ENCODE measurements at regions of chr22 and their contacts with region 1.

Region 1: DNA sequence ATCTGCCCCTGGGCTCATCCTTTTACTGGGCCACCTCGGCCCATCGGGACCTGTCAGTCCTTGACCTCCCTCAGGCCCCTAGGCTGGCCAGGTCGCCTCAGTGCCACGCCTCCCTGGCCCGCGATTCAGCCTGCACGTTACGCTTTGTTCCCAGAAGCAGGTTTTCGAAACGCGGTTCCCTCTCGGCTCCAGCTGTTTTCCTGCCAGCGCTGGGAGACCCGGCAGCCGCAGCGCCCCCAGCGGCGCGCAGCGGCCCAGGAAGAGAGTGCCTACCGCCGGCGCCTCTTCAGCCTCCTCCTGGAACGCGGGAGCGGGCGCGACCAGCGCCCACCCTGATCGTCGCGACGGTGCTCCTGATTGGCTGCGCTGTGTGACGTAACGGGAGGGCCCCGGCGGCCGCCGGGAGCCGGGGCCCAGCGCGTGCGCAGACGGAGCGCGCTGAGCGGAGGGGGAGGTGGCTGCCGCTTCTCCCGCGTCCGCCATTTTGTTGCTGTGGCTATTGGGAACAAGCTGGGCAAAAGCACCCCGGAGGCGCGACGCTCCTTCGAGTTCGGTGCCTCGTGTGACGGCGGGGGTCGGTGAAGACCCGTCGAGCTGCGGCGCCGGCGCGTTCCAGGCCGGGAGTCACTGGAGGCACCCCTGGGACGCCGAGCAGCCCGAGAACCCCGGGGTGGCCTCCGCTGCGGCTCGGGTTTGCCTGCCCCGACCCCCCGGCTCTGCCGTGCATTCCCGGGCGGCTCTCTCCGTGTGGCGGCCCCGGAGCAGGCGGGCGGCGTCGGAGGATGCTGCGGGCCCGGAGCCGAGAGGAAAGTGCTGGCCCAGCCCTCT is at the start of gene CRKL:
- DNase-seq: peak; percentile 98
- H3K4me3 ChIP-seq: peak within 1 kb of the TSS; percentile 97
- H3K27ac ChIP-seq: peak within 1 kb of the TSS; percentile 70
- H3K4me1 ChIP-seq: peaks cover 16% of the 10 kb centered on the region
- CTCF ChIP-seq: peak; percentile 91
- total RNA-seq, gene CRKL: 47.5 and 57.7 TPM in 2 replicates

Region 2: DNA sequence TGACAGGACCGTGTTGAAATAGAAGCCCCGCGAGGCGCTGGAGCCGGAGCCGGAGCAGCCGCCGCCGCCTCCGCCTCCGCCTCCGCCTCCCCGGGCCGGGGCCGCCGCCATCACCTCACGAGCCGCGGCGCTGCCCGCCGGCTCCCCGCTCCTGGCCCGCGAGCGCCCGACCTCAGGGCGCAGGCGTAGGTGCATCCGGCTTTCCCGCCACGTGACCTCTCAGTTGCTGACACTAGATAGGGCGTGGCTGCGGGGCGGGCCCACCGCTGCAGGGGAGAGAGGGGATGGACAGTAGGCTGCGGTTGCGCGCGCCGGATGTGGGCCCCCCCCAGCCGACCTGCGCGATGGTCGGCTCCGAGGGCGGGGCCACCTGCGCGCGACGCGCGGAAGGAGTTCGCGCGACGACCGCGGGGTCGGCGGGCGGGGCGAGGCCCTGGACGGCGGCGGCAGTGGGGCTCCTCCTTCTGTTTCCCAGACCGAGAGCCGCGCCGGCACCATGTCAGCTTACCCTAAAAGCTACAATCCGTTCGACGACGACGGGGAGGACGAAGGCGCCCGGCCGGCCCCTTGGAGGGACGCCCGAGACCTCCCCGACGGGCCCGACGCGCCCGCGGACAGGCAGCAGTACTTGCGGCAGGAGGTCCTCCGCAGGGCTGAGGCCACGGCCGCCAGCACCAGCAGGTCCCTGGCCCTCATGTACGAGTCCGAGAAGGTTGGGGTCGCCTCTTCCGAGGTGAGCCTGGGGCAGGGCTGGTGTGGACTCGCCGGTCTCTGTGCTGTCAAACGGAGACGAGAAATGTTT is 58.4 kb before region 1 on chr22 and contains the starts of genes PI4KA and SNAP29:
- CTCF ChIA-PET with region 1: no interaction called
- POLR2A ChIA-PET with region 1: interaction called, 3 read pairs
- intact Hi-C with region 1: loop called (anchors 2 kb)
- DNase-seq: peak; percentile 98
- H3K4me3 ChIP-seq: peak within 1 kb of the TSS; percentile 94
- H3K27ac ChIP-seq: peak within 1 kb of the TSS; percentile 41
- H3K4me1 ChIP-seq: peaks cover 22% of the 10 kb centered on the region
- CTCF ChIP-seq: no peak
- total RNA-seq, gene PI4KA: 43.9 and 46.9 TPM in 2 replicates
- total RNA-seq, gene SNAP29: 9.7 and 12.7 TPM in 2 replicates

Region 3: DNA sequence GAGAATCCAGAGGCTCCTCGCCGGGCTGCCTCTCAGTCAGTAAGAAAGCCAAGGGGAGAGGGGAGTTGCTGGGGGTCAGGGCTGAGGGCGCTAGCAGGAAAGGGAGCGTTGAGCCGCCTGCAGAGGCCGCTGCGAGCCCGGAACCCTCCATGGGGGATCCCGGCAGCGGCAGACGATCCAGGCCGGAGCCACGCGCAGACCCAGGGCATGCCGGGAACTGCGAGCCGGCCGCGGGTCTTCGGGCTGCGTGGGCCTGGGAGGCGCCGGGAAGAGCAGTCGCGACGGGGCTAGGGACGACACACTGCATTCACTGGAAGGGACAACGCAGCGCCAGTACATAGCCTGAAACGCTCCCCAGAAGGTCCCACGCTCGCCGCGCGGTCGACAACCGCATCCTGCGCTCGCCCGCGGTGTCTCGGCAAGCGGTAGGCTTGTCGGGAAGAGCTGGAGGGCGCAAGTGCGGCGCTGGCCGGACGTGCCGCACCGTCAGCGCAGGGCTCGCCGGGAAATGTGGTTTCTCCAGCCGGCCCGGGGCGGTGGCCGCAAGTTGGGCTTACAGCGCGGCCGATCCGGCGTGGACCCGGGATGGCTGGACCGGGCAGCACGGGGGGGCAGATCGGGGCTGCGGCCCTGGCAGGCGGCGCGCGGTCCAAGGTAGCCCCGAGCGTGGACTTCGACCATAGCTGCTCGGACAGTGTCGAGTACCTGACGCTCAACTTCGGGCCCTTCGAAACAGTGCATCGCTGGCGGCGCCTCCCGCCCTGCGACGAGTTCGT is 64.8 kb after region 1 on chr22 and contains the start of gene LZTR1:
- CTCF ChIA-PET with region 1: no interaction called
- POLR2A ChIA-PET with region 1: no interaction called
- intact Hi-C with region 1: loop called (anchors 10 kb)
- DNase-seq: peak; percentile 87
- H3K4me3 ChIP-seq: peak within 1 kb of the TSS; percentile 81
- H3K27ac ChIP-seq: peak within 1 kb of the TSS; percentile 48
- H3K4me1 ChIP-seq: peaks cover 19% of the 10 kb centered on the region
- CTCF ChIP-seq: peak; percentile 81
- total RNA-seq, gene LZTR1: 46.8 and 48.3 TPM in 2 replicates

Region 4: DNA sequence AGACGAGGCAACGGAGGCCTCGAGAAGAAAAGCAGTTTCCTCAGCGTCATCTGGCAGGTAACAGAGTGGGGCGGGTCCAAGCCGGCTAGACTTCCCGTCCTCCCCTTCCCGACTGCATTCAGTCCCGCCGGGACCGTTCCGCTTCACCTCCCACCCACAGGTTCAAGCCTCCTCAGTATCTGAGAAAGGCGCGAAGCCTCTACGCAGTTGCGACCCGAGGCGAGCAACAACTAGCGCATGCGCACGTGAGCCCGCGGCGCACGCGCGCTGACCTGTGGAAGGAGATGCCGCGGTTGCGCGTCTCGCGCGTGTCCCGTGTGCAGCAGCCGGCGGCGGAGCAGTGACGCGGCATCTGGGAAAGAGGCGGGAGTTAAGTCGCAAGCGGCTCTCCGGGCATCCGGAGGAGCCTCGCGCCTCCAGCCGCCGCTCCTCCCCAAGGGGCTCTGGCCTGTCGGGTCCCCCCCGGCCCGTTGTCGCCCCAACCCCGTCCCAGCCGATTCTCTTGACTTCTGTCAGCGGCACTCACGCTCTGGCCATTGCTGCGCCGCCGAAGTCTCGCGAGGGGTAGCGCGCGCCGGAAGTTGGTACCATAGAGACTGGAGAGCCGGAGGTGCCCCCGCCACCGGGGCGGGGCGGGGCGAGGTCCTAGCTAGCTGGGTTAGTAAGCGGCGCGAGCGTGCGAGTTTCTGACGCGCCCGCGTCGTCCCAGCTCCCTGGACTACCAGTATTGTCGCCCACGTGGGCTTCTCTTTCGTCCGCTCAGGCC is 84.5 kb after region 1 on chr22 and contains the start of gene THAP7:
- CTCF ChIA-PET with region 1: no interaction called
- POLR2A ChIA-PET with region 1: no interaction called
- intact Hi-C with region 1: loop called (anchors 1 kb)
- DNase-seq: peak; percentile 97
- H3K4me3 ChIP-seq: peak within 1 kb of the TSS; percentile 83
- H3K27ac ChIP-seq: peak within 1 kb of the TSS; percentile 96
- H3K4me1 ChIP-seq: peaks cover 36% of the 10 kb centered on the region
- CTCF ChIP-seq: no peak
- total RNA-seq, gene THAP7: 60.4 and 73.0 TPM in 2 replicates

Region 5: GRCh38 chr22:21867528-21868266 is 950.5 kb after region 1 on chr22 and contains the start of gene MAPK1:
- CTCF ChIA-PET with region 1: no interaction called
- POLR2A ChIA-PET with region 1: no interaction called
- intact Hi-C with region 1: loop called (anchors 5 kb)
- DNase-seq: peak; percentile 93
- H3K4me3 ChIP-seq: peak within 1 kb of the TSS; percentile 99
- H3K27ac ChIP-seq: peak within 1 kb of the TSS; percentile 71
- H3K4me1 ChIP-seq: peaks cover 30% of the 10 kb centered on the region
- CTCF ChIP-seq: peak; percentile 65
- total RNA-seq, gene MAPK1: 28.9 and 39.6 TPM in 2 replicates